ENCODE measurements at regions of chr6 and their contacts with region 1.

Region 1: GRCh38 chr6:131063028-131063763 is at the start of gene EPB41L2:
- DNase-seq: peak; percentile 76
- H3K4me3 Mint-ChIP-seq: peak within 1 kb of the TSS; percentile 81
- H3K27ac Mint-ChIP-seq: peak within 1 kb of the TSS; percentile 14
- H3K4me1 Mint-ChIP-seq: peaks cover 21% of the 10 kb centered on the region
- H3K27me3 Mint-ChIP-seq: peaks cover 15% of the 10 kb centered on the region
- total RNA-seq, gene EPB41L2: 17.7 and 18.7 TPM in 2 replicates

Region 2: GRCh38 chr6:131135244-131136020 is 72.2 kb after region 1 on chr6 and contains the start of gene AKAP7:
- intact Hi-C with region 1: loop called (anchors 2 kb)
- DNase-seq: peak; percentile 39
- H3K4me3 Mint-ChIP-seq: peak within 1 kb of the TSS; percentile 90
- H3K27ac Mint-ChIP-seq: peak within 1 kb of the TSS; percentile 93
- H3K4me1 Mint-ChIP-seq: peaks cover 18% of the 10 kb centered on the region
- H3K27me3 Mint-ChIP-seq: peaks cover 14% of the 10 kb centered on the region
- total RNA-seq, gene AKAP7: 3.4 and 3.8 TPM in 2 replicates

Region 3: DNA sequence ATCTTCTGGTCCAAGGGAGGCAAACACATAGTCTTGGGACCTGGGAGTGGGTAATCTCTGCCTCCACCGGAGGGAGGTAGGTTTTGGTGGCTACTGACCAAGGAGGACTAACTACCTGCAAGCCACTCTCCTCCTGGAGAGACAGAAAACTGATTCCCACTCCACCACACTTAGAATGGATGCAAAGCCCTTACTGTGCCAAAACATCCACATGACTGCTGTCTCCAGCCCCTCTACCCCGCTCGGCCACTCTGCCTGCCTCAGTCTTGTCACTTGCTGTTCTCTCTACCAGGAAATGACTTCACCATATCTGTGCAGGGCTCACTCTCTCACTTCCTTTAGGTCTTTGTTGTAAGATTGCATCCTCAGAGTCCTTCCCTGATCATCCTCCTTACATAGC is 380.3 kb after region 1 on chr6:
- intact Hi-C with region 1: loop called (anchors 10 kb)
- DNase-seq: peak; percentile 24
- H3K4me3 Mint-ChIP-seq: peak overlapping the region; percentile 91
- H3K27ac Mint-ChIP-seq: peak overlapping the region; percentile 95
- H3K4me1 Mint-ChIP-seq: peaks cover 60% of the 10 kb centered on the region
- H3K27me3 Mint-ChIP-seq: no peaks in the 10 kb centered on the region